Naive thymus-derived CD4-positive, alpha-beta T cell (primary cell): ENCODE measurements at regions of chr16 and their contacts with region 1.

Region 1: GRCh38 chr16:65126845-65127624 is 5.2 kb upstream of the CDH11 start:
- DNase-seq: no peak
- ATAC-seq: no peak
- H3K4me3 ChIP-seq: no peak overlapping the region
- H3K4me3 Mint-ChIP-seq: no peak overlapping the region
- H3K27ac ChIP-seq: no peak overlapping the region
- H3K27ac Mint-ChIP-seq: no peak overlapping the region
- H3K4me1 ChIP-seq: no peaks in the 10 kb centered on the region
- H3K4me1 Mint-ChIP-seq: peaks cover 0 to 9% (median 0%) of the 10 kb centered on the region in 7 donors
- H3K27me3 ChIP-seq: no peaks in the 10 kb centered on the region
- H3K27me3 Mint-ChIP-seq: peaks cover 11 to 23% (median 18%) of the 10 kb centered on the region in 5 donors

Region 2: DNA sequence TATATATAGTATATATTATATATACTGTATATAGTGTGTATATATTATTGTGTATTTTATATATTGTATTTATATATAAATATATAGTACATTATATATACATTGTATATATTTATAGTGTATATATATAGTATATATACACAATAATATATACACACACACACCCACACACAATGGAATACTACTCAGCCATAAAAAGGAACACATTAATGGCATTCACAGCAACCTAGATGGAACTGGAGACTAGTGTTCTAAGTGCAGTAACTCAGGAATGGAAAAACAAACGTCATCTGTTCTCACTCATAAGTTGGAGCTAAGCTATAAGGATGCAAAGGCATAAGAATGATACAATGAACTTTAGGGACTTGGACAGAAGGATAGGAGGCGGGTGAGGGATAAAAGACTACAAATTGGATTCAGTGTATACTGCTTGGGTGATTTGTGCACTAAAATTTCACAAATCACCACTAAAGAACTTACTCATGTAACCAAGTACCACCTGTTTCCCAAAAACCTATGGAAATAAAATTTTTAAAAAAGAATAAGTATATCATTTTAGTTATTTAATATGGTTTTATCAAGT is 196.7 kb after region 1 on chr16:
- CTCF ChIA-PET with region 1: no interaction called
- POLR2A ChIA-PET with region 1: no interaction called
- intact Hi-C with region 1: loop called in 1 of 2 experiments (anchors 2 kb)
- DNase-seq: peak in 2 of 9 donors; percentile 5 to 11
- ATAC-seq: no peak
- H3K4me3 ChIP-seq: no peak overlapping the region
- H3K4me3 Mint-ChIP-seq: no peak overlapping the region
- H3K27ac ChIP-seq: no peak overlapping the region
- H3K27ac Mint-ChIP-seq: no peak overlapping the region
- H3K4me1 ChIP-seq: no peaks in the 10 kb centered on the region
- H3K4me1 Mint-ChIP-seq: no peaks in the 10 kb centered on the region
- H3K27me3 ChIP-seq: no peaks in the 10 kb centered on the region
- H3K27me3 Mint-ChIP-seq: no peaks in the 10 kb centered on the region